ENCODE measurements at regions of chr10 and their contacts with region 1.

Region 1: GRCh38 chr10:6114805-6115341 is 26.0 kb downstream of the RBM17 start:
- DNase-seq: no peak
- H3K4me3 ChIP-seq: no peak overlapping the region
- H3K27ac ChIP-seq: no peak overlapping the region
- H3K4me1 ChIP-seq: no peaks in the 10 kb centered on the region
- H3K27me3 ChIP-seq: no peaks in the 10 kb centered on the region
- CTCF ChIP-seq: no peak

Region 2: GRCh38 chr10:6020826-6021225 is 94.0 kb before region 1 on chr10:
- intact Hi-C with region 1: no loop called
- DNase-seq: peak; percentile 15
- H3K4me3 ChIP-seq: no peak overlapping the region
- H3K27ac ChIP-seq: no peak overlapping the region
- H3K4me1 ChIP-seq: peaks cover 4% of the 10 kb centered on the region
- H3K27me3 ChIP-seq: no peaks in the 10 kb centered on the region
- CTCF ChIP-seq: no peak

Region 3: GRCh38 chr10:6151087-6151977 is 36.5 kb after region 1 on chr10:
- intact Hi-C with region 1: loop called (anchors 5 kb)
- DNase-seq: peak; percentile 62
- H3K4me3 ChIP-seq: no peak overlapping the region
- H3K27ac ChIP-seq: peak overlapping the region; percentile 34
- H3K4me1 ChIP-seq: no peaks in the 10 kb centered on the region
- H3K27me3 ChIP-seq: no peaks in the 10 kb centered on the region
- CTCF ChIP-seq: peak; percentile 55